ENCODE measurements at regions of chr7 and their contacts with region 1.

Region 1: GRCh38 chr7:87312215-87312865 is 33.1 kb upstream of the CROT start:
- DNase-seq: no peak
- H3K4me3 ChIP-seq: no peak overlapping the region
- H3K27ac ChIP-seq: no peak overlapping the region
- H3K4me1 ChIP-seq: no peaks in the 10 kb centered on the region
- H3K27me3 ChIP-seq: no peaks in the 10 kb centered on the region
- CTCF ChIP-seq: peak; percentile 85

Region 2: DNA sequence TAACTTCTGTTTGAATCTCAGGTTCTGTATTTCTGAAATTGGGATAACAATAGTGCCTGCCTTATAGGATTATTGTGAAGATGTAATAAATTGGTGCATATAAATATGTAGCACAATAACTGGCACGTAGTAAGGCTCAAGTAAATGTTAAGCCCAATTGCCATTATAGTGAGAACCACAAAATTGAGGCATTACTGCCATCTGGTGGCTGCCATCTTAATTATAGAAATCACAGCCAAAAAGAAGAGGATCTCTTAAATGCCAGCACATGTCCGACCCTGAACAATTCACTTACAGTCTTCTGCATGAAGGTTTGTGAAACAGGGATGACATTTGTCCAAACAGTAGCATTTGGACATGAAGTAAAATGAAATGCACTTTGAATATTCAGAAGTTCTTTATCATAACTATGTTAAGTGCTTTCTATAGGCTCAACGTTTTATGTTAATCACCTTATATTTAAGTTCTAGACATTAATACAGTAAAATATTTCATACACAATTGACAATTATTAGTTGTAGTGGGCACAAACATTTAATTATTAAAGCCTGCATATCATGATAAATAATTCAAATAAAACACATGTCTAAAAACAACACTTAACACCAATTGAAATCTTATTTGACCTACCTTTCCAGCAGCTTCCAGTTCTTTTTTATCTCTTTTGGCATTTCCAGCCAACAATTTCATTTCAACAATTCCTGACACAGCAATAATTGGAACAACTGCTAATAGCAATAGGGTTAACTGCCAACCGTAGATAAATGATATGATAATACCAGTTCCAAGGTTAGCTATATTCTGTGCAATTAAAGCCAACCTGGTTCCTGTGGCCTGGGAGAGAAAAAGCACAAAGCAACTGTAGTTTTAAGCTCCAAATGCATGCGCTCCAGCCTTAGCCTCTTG is 104.6 kb after region 1 on chr7:
- intact Hi-C with region 1: loop called (anchors 5 kb)
- DNase-seq: no peak
- H3K4me3 ChIP-seq: no peak overlapping the region
- H3K27ac ChIP-seq: no peak overlapping the region
- H3K4me1 ChIP-seq: no peaks in the 10 kb centered on the region
- H3K27me3 ChIP-seq: no peaks in the 10 kb centered on the region
- CTCF ChIP-seq: peak; percentile 75